ENCODE measurements at regions of chr6 and their contacts with region 1.

Region 1: GRCh38 chr6:138817822-138818308 is 22.0 kb downstream of the ECT2L start:
- DNase-seq: peak; percentile 94 to 97
- H3K4me3 ChIP-seq: no peak overlapping the region
- H3K4me3 Mint-ChIP-seq: peak overlapping the region; percentile 42
- H3K27ac Mint-ChIP-seq: peak overlapping the region; percentile 92
- H3K4me1 ChIP-seq: peaks cover 36% of the 10 kb centered on the region
- H3K4me1 Mint-ChIP-seq: peaks cover 42% of the 10 kb centered on the region
- H3K27me3 ChIP-seq: no peaks in the 10 kb centered on the region
- H3K27me3 Mint-ChIP-seq: no peaks in the 10 kb centered on the region
- CTCF ChIP-seq: no peak

Region 2: DNA sequence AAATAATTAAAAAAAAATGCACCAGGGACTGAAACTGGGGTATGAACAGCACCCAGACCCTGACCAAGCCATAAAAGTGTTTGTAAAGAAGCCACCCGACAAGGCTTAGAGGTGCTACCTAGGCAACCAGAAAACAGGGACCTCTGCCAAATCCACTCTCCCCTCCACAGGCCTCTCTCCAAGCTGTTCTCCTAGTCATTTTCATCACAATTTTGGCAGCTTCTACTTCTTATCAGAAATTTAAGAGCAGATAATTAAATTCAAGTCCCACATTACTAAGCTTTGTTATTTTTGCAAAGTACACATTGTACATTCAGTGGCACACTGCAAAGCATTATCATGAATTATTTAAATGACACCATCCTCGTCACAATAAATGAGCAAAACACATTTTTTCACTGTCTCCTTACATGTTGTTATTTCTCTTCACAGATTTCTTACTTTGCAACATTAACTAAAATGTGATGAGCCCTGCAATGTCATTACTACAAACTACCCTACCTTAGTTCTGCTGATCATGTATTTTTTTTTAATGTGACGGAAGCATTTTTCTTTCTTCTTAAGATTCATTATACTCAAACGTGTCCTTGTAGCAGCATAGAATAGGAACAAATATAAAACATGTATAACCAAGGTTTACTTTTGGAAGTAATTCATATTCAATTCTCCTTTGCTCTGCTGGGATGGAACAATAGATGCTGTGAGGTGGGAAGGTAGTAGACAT is 16.1 kb after region 1 on chr6:
- CTCF ChIA-PET with region 1: no interaction called
- POLR2A ChIA-PET with region 1: no interaction called
- intact Hi-C with region 1: no loop called
- DNase-seq: no peak
- H3K4me3 ChIP-seq: no peak overlapping the region
- H3K4me3 Mint-ChIP-seq: no peak overlapping the region
- H3K27ac Mint-ChIP-seq: no peak overlapping the region
- H3K4me1 ChIP-seq: no peaks in the 10 kb centered on the region
- H3K4me1 Mint-ChIP-seq: no peaks in the 10 kb centered on the region
- H3K27me3 ChIP-seq: no peaks in the 10 kb centered on the region
- H3K27me3 Mint-ChIP-seq: no peaks in the 10 kb centered on the region
- CTCF ChIP-seq: no peak

Region 3: GRCh38 chr6:138863321-138863720 is 45.5 kb after region 1 on chr6:
- CTCF ChIA-PET with region 1: no interaction called
- POLR2A ChIA-PET with region 1: no interaction called
- intact Hi-C with region 1: no loop called
- DNase-seq: no peak
- H3K4me3 ChIP-seq: no peak overlapping the region
- H3K4me3 Mint-ChIP-seq: no peak overlapping the region
- H3K27ac Mint-ChIP-seq: no peak overlapping the region
- H3K4me1 ChIP-seq: no peaks in the 10 kb centered on the region
- H3K4me1 Mint-ChIP-seq: no peaks in the 10 kb centered on the region
- H3K27me3 ChIP-seq: no peaks in the 10 kb centered on the region
- H3K27me3 Mint-ChIP-seq: no peaks in the 10 kb centered on the region
- CTCF ChIP-seq: no peak

Region 4: DNA sequence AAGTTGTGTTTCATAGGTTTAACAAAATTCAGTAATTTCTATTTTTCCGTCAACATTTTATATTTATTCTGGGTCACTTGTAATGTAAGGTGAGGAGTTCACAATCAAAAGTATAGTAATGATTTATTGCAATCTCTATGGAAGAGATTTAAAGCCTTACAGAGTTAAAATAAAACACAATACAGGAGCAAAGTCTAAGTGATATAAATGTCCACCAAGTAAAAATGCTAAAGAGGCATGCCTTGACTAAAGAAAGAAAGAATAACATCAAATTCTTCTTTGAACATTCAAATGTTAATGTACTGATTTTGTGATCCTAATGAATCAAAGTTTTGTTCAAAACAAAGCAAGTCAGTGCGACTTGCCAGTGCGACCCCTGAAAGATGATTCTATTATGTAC is 108.7 kb after region 1 on chr6:
- CTCF ChIA-PET with region 1: interaction called, 3 read pairs
- POLR2A ChIA-PET with region 1: no interaction called
- intact Hi-C with region 1: loop called (anchors 5 kb)
- DNase-seq: no peak
- H3K4me3 ChIP-seq: no peak overlapping the region
- H3K4me3 Mint-ChIP-seq: no peak overlapping the region
- H3K27ac Mint-ChIP-seq: no peak overlapping the region
- H3K4me1 ChIP-seq: 0 out of 2 replicates have a peak, but pooled peaks cover 5% of the 10 kb centered on the region
- H3K4me1 Mint-ChIP-seq: peaks cover 6% of the 10 kb centered on the region
- H3K27me3 ChIP-seq: no peaks in the 10 kb centered on the region
- H3K27me3 Mint-ChIP-seq: no peaks in the 10 kb centered on the region
- CTCF ChIP-seq: no peak

Region 5: DNA sequence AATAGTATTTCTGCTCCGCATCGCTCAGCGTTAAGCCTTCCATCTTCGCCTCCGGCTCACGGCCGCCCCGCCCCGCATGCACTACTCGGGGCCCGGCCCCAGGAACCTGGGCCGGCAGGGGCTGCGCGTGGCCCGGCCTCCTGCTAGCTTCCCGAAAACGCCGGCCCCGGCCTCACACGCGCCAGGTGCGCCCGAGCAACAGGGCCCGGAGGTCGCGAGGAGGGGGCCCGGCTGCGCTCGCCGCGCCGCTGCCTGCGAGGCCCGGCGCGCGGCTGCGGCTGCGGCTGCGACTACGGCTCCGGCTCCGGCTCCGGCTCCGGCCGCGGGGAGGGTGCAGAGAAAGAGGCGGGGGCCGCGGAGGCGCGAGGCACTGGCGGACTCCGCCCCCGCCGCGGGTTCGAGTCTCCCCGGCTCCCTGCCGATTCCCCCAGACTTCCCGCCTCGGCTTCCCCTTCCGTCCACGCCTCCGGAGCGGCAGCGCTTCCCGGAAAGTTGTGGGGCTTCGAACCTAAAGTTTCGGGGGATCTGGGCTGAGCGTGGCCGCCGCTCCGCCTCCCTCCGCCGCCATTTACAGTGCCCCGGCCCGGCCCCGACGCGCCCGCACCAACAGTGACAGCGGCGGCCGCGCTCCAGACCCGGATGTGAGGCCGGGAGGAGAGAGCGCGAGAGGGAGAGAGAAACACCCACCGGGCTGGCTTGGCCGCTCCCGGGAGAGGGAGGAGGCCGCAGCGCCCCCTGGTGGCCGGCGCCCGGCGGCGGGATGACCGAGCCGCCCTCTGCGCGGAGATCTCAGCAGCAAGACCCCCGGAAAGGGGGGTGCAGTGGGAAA is 170.0 kb after region 1 on chr6 and contains the start of gene REPS1:
- CTCF ChIA-PET with region 1: no interaction called
- POLR2A ChIA-PET with region 1: interaction called, 3 read pairs
- intact Hi-C with region 1: loop called (anchors 1 kb)
- DNase-seq: peak; percentile 91 to 95
- H3K4me3 ChIP-seq: peak within 1 kb of the TSS; percentile 94
- H3K4me3 Mint-ChIP-seq: peak within 1 kb of the TSS; percentile 90
- H3K27ac Mint-ChIP-seq: peak within 1 kb of the TSS; percentile 91
- H3K4me1 ChIP-seq: peaks cover 30% of the 10 kb centered on the region
- H3K4me1 Mint-ChIP-seq: peaks cover 12% of the 10 kb centered on the region
- H3K27me3 ChIP-seq: no peaks in the 10 kb centered on the region
- H3K27me3 Mint-ChIP-seq: no peaks in the 10 kb centered on the region
- CTCF ChIP-seq: peak; percentile 89 to 93
- total RNA-seq, gene REPS1: 74.1 and 79.9 TPM in 2 replicates

Region 6: GRCh38 chr6:139050770-139051313 is 233.0 kb after region 1 on chr6:
- CTCF ChIA-PET with region 1: no interaction called
- POLR2A ChIA-PET with region 1: no interaction called
- intact Hi-C with region 1: loop called (anchors 1 kb)
- DNase-seq: no peak
- H3K4me3 ChIP-seq: no peak overlapping the region
- H3K4me3 Mint-ChIP-seq: no peak overlapping the region
- H3K27ac Mint-ChIP-seq: no peak overlapping the region
- H3K4me1 ChIP-seq: no peaks in the 10 kb centered on the region
- H3K4me1 Mint-ChIP-seq: no peaks in the 10 kb centered on the region
- H3K27me3 ChIP-seq: no peaks in the 10 kb centered on the region
- H3K27me3 Mint-ChIP-seq: no peaks in the 10 kb centered on the region
- CTCF ChIP-seq: no peak

Region 7: GRCh38 chr6:139204978-139205377 is 387.1 kb after region 1 on chr6:
- CTCF ChIA-PET with region 1: no interaction called
- POLR2A ChIA-PET with region 1: no interaction called
- intact Hi-C with region 1: loop called (anchors 10 kb)
- DNase-seq: no peak
- H3K4me3 ChIP-seq: no peak overlapping the region
- H3K4me3 Mint-ChIP-seq: no peak overlapping the region
- H3K27ac Mint-ChIP-seq: no peak overlapping the region
- H3K4me1 ChIP-seq: no peaks in the 10 kb centered on the region
- H3K4me1 Mint-ChIP-seq: no peaks in the 10 kb centered on the region
- H3K27me3 ChIP-seq: no peaks in the 10 kb centered on the region
- H3K27me3 Mint-ChIP-seq: peaks cover 3% of the 10 kb centered on the region
- CTCF ChIP-seq: no peak

Measured in Caco-2 (cell line).